ENCODE measurements at regions of chr6 and their contacts with region 1.

Region 1: GRCh38 chr6:106979427-106979884 is 4.9 kb upstream of the CD24 start:
- DNase-seq: peak; percentile 63 to 92
- H3K4me3 ChIP-seq: no peak overlapping the region
- H3K4me1 ChIP-seq: no peaks in the 10 kb centered on the region
- H3K27me3 ChIP-seq: no peaks in the 10 kb centered on the region

Region 2: GRCh38 chr6:106325336-106326178 is 653.9 kb before region 1 on chr6 and contains the start of gene ATG5:
- in situ Hi-C with region 1: loop called (anchors 25 kb)
- DNase-seq: peak; percentile 96 to 99
- H3K4me3 ChIP-seq: peak within 1 kb of the TSS; percentile 87
- H3K4me1 ChIP-seq: peaks cover 12% of the 10 kb centered on the region
- H3K27me3 ChIP-seq: no peaks in the 10 kb centered on the region

Region 3: DNA sequence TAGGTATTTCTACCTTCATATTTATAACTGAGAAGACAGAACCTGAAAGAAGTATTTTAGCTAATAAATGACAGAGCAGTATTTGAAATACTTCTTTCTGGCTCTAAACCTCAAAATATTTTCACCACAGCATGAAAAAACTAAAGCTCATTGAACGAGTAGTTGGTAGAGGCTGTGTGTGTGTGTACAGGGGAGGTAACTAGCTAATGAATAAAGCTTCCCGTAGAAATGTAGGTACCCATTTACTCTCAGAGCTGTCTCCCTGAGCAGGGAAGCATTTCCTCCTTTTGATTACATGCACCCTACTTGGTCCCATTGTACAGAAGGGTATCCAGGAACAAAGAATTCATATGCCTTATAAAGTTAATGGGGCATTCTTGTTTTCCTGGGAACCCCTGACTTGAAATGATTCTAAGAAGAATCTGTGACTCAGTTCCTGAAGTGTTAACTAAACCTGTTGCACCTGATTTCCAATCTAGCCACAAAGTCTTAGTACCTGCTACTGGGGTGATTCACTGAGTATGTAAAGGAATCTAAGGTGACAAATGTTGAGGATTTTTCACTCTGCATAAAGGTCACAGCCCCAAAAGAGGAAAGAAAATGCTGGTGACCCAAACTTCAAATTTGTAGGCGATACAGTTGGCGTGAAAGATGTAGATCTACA is 606.5 kb before region 1 on chr6:
- in situ Hi-C with region 1: no loop called
- DNase-seq: no peak
- H3K4me3 ChIP-seq: no peak overlapping the region
- H3K4me1 ChIP-seq: no peaks in the 10 kb centered on the region
- H3K27me3 ChIP-seq: peaks cover 14% of the 10 kb centered on the region

Region 4: GRCh38 chr6:106444777-106445507 is 534.5 kb before region 1 on chr6:
- in situ Hi-C with region 1: loop called (anchors 10 kb)
- DNase-seq: peak; percentile 50 to 70
- H3K4me3 ChIP-seq: no peak overlapping the region
- H3K4me1 ChIP-seq: no peaks in the 10 kb centered on the region
- H3K27me3 ChIP-seq: peaks cover 44% of the 10 kb centered on the region

Region 5: GRCh38 chr6:106510090-106510970 is 469.1 kb before region 1 on chr6:
- in situ Hi-C with region 1: no loop called
- DNase-seq: peak; percentile 38 to 80
- H3K4me3 ChIP-seq: peak overlapping the region; percentile 35
- H3K4me1 ChIP-seq: peaks cover 13% of the 10 kb centered on the region
- H3K27me3 ChIP-seq: peaks cover 22% of the 10 kb centered on the region

Region 6: DNA sequence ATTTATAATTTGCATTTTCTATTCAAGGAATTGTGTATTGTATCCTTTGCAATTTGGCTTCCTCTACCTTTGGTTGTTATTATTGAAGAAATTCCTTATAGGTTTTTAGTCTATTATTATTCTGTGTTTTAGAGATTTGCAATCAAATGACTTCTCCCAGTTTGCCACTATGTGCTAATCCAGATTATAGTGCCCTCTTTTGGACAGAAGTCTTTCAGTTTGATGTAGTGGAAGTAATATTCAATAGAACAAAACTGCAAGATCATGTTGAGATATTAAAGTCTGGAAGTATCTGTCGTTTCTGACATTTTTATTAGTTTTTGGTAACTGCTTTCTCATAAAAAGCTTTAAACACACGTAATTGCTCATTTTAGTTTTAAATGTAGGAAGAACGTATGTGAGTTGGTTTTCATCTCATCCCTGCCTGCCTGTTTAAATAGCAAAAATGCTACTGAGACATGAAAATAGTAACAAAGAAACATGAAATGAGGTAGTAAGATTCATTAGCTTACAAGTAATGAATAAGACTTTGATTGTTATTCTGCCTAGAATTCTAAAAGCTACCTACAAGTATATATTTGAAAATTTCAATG is 423.0 kb before region 1 on chr6:
- in situ Hi-C with region 1: loop called (anchors 25 kb)
- DNase-seq: peak in 1 of 2 experiments; percentile 52
- H3K4me3 ChIP-seq: no peak overlapping the region
- H3K4me1 ChIP-seq: peaks cover 4% of the 10 kb centered on the region; the same call in 1 of the 2 replicates
- H3K27me3 ChIP-seq: no peaks in the 10 kb centered on the region